OCI-LY7 (cell line): ENCODE measurements at regions of chr6 and their contacts with region 1.

Region 1: DNA sequence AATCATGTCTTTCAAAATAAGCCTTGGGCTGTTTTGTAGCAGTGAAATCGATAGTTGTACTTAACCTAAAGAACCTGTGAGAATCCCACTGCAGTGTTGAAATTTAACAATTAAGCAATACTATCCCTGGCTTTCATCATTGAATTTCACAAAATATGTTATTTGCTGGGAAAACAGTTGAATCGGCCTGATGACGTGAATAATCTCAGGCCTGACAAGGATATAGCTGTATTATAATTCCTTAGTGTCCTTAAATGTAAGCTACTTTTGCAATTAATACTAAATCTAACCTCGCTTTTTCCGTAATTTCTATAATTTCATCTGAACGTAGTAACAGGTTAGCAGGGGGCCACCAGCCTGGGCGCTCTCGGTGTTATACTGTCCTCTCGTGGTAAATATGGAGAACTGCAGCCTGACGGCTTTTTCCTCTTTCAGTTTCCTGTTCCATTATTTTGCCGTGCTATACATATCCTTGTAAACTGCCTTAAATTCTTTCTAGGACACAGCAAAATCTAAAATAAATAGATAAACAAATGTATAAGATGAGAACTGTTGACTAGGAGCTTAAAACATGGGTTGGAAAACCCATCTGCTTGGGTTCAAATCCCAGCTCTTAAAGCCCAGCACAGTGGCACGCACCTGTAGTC is 24.0 kb downstream of the MTFR2 start:
- DNase-seq: peak; percentile 59
- H3K4me3 ChIP-seq: no peak overlapping the region
- H3K27ac ChIP-seq: no peak overlapping the region
- H3K4me1 ChIP-seq: peaks cover 14% of the 10 kb centered on the region
- CTCF ChIP-seq: peak; percentile 100

Region 2: GRCh38 chr6:135451693-135452092 is 774.5 kb before region 1 on chr6:
- CTCF ChIA-PET with region 1: no interaction called
- POLR2A ChIA-PET with region 1: interaction called, 4 read pairs
- intact Hi-C with region 1: loop called (anchors 5 kb)
- DNase-seq: peak; percentile 68
- H3K4me3 ChIP-seq: no peak overlapping the region
- H3K27ac ChIP-seq: no peak overlapping the region
- H3K4me1 ChIP-seq: no peaks in the 10 kb centered on the region
- CTCF ChIP-seq: peak; percentile 96

Region 3: DNA sequence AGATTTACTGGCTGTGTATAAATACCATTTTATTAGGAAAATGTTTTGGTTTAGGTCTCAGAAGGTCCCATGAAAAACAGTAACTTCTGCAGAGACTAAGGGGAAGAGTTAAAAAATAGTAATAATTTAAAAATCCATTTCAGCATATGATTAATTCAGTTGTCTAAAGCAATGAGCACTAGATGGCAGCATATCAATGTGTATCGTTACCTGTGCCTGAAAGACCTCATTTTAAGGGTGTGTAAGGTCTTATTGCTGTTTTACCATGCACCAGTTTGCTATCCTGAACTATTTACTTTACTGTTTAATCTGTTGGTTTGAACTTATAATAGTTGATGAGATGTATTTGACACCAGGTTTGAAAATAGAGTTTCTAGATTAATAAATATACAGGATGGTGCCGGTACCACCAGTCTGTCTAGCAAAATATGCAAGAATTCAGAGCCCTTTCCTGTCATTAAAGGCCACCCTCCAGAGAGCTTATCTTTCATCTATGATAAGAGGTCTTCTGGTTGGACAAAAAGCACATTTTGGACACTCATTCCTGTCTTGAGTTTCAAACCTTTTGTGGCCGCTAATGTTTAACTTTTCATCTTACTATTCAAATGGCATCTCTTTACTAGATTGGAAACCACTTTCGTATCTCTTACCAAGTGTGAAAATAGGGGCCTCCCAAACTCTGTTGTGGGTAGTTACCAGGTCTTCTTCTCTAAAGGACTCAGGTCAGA is 719.7 kb before region 1 on chr6:
- CTCF ChIA-PET with region 1: interaction called, 3 read pairs
- POLR2A ChIA-PET with region 1: no interaction called
- intact Hi-C with region 1: loop called (anchors 5 kb)
- DNase-seq: peak; percentile 59
- H3K4me3 ChIP-seq: no peak overlapping the region
- H3K27ac ChIP-seq: no peak overlapping the region
- H3K4me1 ChIP-seq: no peaks in the 10 kb centered on the region
- CTCF ChIP-seq: peak; percentile 89

Region 4: GRCh38 chr6:135535989-135536414 is 690.1 kb before region 1 on chr6:
- CTCF ChIA-PET with region 1: no interaction called
- POLR2A ChIA-PET with region 1: no interaction called
- intact Hi-C with region 1: loop called (anchors 2 kb)
- DNase-seq: peak; percentile 52
- H3K4me3 ChIP-seq: no peak overlapping the region
- H3K27ac ChIP-seq: no peak overlapping the region
- H3K4me1 ChIP-seq: no peaks in the 10 kb centered on the region
- CTCF ChIP-seq: peak; percentile 90

Region 5: GRCh38 chr6:135675862-135676261 is 550.3 kb before region 1 on chr6:
- CTCF ChIA-PET with region 1: no interaction called
- POLR2A ChIA-PET with region 1: no interaction called
- intact Hi-C with region 1: loop called (anchors 1 kb)
- DNase-seq: peak; percentile 36
- H3K4me3 ChIP-seq: no peak overlapping the region
- H3K27ac ChIP-seq: no peak overlapping the region
- H3K4me1 ChIP-seq: no peaks in the 10 kb centered on the region
- CTCF ChIP-seq: peak; percentile 74

Region 6: DNA sequence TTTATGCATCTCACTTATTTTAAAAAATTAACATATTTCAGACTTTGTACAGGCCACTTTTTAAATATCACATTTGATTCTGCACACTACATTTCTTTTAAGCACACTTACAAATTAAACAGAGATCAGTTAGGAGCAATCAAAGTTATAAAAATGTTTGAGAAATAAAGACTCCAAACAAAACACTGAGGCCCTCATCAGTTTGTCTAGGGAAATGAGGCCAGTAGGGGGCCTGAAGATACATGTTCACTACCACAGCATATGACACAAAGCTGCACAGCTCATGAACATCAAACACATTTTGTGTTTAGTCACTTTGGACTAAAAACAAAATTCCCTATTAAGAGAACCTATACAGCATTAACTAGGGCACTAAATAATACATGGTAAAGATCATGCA is 194.2 kb before region 1 on chr6:
- CTCF ChIA-PET with region 1: no interaction called
- POLR2A ChIA-PET with region 1: no interaction called
- intact Hi-C with region 1: loop called (anchors 10 kb)
- DNase-seq: peak; percentile 4
- H3K4me3 ChIP-seq: no peak overlapping the region
- H3K27ac ChIP-seq: no peak overlapping the region
- H3K4me1 ChIP-seq: no peaks in the 10 kb centered on the region
- CTCF ChIP-seq: peak; percentile 64

Region 7: GRCh38 chr6:136180704-136181511 is 45.2 kb before region 1 on chr6:
- CTCF ChIA-PET with region 1: no interaction called
- POLR2A ChIA-PET with region 1: no interaction called
- intact Hi-C with region 1: no loop called
- DNase-seq: no peak
- H3K4me3 ChIP-seq: no peak overlapping the region
- H3K27ac ChIP-seq: no peak overlapping the region
- H3K4me1 ChIP-seq: peaks cover 8% of the 10 kb centered on the region
- CTCF ChIP-seq: no peak

Region 8: GRCh38 chr6:136317021-136317694 is 91.0 kb after region 1 on chr6:
- CTCF ChIA-PET with region 1: no interaction called
- POLR2A ChIA-PET with region 1: interaction called, 3 read pairs
- intact Hi-C with region 1: loop called (anchors 5 kb)
- DNase-seq: peak; percentile 67
- H3K4me3 ChIP-seq: no peak overlapping the region
- H3K27ac ChIP-seq: no peak overlapping the region
- H3K4me1 ChIP-seq: no peaks in the 10 kb centered on the region
- CTCF ChIP-seq: peak; percentile 88